ENCODE measurements at regions of chr7 and their contacts with region 1.

Region 1: DNA sequence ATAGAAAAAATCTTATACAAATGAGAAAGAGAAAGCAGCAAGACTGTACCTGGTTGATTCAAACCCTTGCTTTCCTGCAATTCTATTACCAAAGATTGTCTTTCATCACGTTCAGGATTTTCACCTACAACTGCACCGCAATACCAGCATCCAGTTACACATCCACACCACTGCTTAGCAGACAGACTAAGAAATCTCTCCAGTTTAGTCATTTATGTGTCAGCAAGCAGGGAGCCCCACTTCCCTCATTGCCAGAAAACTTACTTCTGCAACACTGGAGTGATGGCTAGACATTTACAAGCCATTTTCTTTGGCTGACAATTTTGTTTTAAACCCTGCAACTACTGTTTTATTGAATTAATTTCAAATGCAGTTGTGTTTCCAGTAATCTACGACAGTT is 359.6 kb upstream of the MEOX2 start:
- DNase-seq: no peak
- ATAC-seq: no peak
- H3K4me3 ChIP-seq: no peak overlapping the region
- H3K27ac ChIP-seq: no peak overlapping the region
- H3K4me1 ChIP-seq: peaks cover 0 to 1% (median 0%) of the 10 kb centered on the region in 12 donors
- H3K27me3 ChIP-seq: no peaks in the 10 kb centered on the region
- CTCF ChIP-seq: no peak
- POLR2A ChIP-seq: no peak

Region 2: GRCh38 chr7:15985587-15986384 is 60.3 kb before region 1 on chr7:
- intact Hi-C with region 1: loop called in 1 of 10 experiments (anchors 10 kb)
- DNase-seq: no peak
- ATAC-seq: no peak
- H3K4me3 ChIP-seq: no peak overlapping the region
- H3K27ac ChIP-seq: no peak overlapping the region
- H3K4me1 ChIP-seq: no peaks in the 10 kb centered on the region
- H3K27me3 ChIP-seq: no peaks in the 10 kb centered on the region
- CTCF ChIP-seq: peak in 1 of 12 donors; percentile 12
- POLR2A ChIP-seq: no peak